A673 (cell line): ENCODE measurements at regions of chr6 and their contacts with region 1.

Region 1: GRCh38 chr6:34321821-34322220 is 70.6 kb downstream of the NUDT3 start:
- DNase-seq: no peak
- H3K4me3 ChIP-seq: no peak overlapping the region
- H3K27ac ChIP-seq: no peak overlapping the region
- H3K4me1 ChIP-seq: no peaks in the 10 kb centered on the region
- H3K27me3 ChIP-seq: no peaks in the 10 kb centered on the region
- CTCF ChIP-seq: no peak

Region 2: DNA sequence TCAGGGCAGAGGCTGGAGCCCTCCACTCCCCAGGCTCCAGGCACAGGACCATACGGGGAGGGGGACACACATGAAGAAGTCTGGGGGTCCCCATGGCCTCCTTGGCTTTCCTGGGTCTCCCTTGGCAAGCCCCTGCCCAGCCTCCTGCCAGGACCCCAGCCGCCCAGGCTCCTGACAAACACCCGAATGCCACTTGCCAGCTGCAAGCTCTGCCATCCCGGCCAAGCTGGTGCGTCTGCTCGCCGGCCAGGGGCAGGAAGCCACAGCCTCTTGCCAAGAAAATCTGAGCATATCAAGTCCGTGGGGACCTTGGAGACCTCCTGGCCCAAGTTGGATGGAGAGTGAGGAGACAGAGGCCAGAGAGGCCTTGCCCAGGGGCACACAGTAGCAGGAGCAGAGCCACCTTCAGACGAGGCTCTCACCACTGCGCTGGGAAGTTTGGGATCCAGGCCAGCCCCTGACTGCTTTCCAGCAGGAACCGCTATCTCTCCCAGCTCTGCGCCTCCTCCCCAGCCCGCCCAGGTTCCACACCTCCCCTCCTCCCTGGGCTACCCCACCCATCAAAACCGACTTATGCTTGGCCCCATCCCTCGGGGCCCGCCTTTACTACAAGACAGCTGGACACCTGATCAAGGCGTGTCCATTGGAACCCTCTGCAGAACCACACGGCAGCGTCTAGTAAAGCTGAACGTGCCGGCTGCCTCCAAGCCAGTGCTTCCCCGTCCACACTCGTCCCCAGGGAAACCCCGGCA is 256.2 kb before region 1 on chr6:
- CTCF ChIA-PET with region 1: no interaction called
- POLR2A ChIA-PET with region 1: no interaction called
- intact Hi-C with region 1: no loop called
- DNase-seq: peak; percentile 35
- H3K4me3 ChIP-seq: no peak overlapping the region
- H3K27ac ChIP-seq: no peak overlapping the region
- H3K4me1 ChIP-seq: no peaks in the 10 kb centered on the region
- H3K27me3 ChIP-seq: peaks cover 8% of the 10 kb centered on the region
- CTCF ChIP-seq: no peak

Region 3: DNA sequence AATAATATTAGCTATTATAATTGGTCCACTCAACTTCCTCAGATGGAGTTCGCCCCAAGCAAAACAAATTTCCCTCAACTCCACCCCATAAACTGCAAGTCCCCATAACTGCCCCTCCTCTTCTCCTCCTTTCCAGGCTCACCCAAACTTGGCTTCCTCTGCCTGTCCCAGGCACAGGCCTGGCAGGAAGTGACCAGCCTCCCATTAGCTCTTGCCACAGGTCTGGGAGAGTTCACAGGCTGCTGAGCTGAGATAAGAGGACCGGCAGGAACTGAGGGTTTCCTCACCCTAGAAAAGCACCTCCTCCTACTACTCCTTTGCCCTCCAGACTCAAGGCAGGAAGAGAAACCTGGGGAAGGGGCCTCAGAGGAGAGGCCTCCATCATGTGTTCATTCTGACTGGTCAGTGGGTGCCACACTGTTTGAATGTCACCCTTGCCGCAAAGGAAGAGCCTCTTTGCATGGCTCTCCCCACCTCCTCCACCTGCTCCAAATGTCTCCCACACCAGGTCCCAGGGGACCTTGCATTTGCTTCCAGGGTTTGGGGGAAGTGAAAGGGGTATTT is 48.5 kb before region 1 on chr6:
- CTCF ChIA-PET with region 1: no interaction called
- POLR2A ChIA-PET with region 1: no interaction called
- intact Hi-C with region 1: no loop called
- DNase-seq: no peak
- H3K4me3 ChIP-seq: no peak overlapping the region
- H3K27ac ChIP-seq: no peak overlapping the region
- H3K4me1 ChIP-seq: no peaks in the 10 kb centered on the region
- H3K27me3 ChIP-seq: no peaks in the 10 kb centered on the region
- CTCF ChIP-seq: no peak

Region 4: DNA sequence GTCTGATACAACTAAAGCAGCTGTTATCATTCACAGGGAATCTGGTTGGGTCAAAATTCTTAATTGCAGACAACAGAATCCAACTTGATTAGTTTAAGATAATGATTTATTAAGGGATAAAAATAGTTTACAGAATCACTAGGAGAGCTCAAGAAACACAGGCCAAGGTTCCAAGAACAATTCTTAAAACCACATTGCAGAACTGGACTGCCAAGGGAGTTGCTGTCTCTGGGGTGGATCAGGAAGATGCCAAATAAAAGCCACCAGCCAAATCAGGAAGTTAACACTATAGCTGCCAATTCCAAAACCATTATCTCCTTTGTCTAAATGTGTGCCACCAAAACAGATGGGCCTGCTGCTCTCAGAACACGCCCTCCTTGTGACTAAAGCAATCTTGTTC is 17.0 kb after region 1 on chr6:
- CTCF ChIA-PET with region 1: no interaction called
- POLR2A ChIA-PET with region 1: no interaction called
- intact Hi-C with region 1: loop called (anchors 1 kb)
- DNase-seq: peak; percentile 72
- H3K4me3 ChIP-seq: no peak overlapping the region
- H3K27ac ChIP-seq: no peak overlapping the region
- H3K4me1 ChIP-seq: peaks cover 41% of the 10 kb centered on the region
- H3K27me3 ChIP-seq: no peaks in the 10 kb centered on the region
- CTCF ChIP-seq: no peak